Stomach (tissue), 19 donors: ENCODE measurements at regions of chr18 and their contacts with region 1.

Region 1: DNA sequence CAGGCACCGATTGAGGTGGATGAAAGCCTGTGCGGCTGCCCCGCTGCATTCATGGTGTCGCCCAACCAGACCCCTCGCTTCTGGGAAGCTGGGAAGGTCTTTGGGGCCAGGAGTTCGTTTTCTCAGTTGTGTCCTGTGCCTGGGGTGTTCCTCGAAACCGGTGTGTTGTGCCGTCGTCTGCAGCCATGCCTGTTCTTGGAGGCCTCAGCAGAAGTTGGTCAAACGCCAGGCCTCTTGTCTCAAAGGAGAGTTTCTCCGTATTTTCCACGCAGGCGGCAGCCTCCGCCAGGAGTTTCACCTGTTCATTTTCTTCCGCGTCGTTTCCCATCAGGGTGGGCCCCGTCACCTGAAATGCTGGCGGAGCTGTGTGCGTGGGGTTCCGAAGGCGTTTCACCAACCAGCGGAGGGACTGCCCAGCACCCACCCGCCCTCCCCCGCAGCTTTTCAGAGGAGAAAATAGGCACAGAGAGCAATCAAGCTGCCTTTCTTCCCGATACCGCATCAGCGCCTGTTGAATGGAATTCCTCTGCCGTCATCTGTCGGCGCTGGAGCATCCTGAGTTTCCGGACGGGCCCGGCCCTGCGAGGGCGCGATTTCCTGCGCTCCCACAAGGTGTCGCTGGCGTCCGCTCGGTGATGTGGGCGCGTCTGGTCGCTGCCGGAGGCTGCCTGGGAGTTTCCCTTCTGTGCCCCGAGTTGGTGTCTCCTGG is 17.0 kb upstream of the NFATC1 start:
- DNase-seq: peak; percentile 84 to 93
- H3K4me3 ChIP-seq: no peak overlapping the region
- H3K27ac ChIP-seq: no peak overlapping the region
- H3K4me1 ChIP-seq: peaks cover 0 to 9% (median 7%) of the 10 kb centered on the region in 4 donors
- H3K27me3 ChIP-seq: peaks cover 0 to 10% (median 0%) of the 10 kb centered on the region in 3 donors
- CTCF ChIP-seq: peak in 6 of 7 experiments; percentile 58 to 96 (median 93)
- EP300 ChIP-seq: no peak
- POLR2A ChIP-seq: no peak

Region 2: DNA sequence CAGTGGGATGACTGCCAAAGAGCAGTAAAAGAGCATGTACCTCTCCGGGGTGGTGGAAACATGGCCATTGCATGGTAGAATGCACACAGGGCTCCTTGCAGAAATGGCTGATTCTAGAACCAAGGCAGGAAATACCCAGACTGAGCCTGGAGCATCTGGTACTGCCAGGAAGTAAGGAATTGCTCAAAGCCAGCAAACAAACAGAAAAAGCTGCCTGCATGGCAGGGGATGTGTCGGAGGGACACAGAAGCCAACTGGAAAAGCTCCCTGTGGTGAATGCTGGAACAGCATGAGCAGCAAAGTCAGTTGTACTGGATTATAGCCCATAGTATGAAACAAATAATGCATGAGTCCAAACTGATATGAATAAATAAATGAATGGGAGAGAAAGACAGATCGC is 61.0 kb before region 1 on chr18:
- intact Hi-C with region 1: no loop called
- DNase-seq: no peak
- H3K4me3 ChIP-seq: no peak overlapping the region
- H3K27ac ChIP-seq: no peak overlapping the region
- H3K4me1 ChIP-seq: no peaks in the 10 kb centered on the region
- H3K27me3 ChIP-seq: no peaks in the 10 kb centered on the region
- CTCF ChIP-seq: no peak
- EP300 ChIP-seq: no peak
- POLR2A ChIP-seq: no peak

Region 3: GRCh38 chr18:79528846-79529245 is 150.2 kb after region 1 on chr18:
- intact Hi-C with region 1: loop called (anchors 2 kb)
- DNase-seq: peak; percentile 69 to 86
- H3K4me3 ChIP-seq: no peak overlapping the region
- H3K27ac ChIP-seq: no peak overlapping the region
- H3K4me1 ChIP-seq: peaks cover 6 to 18% (median 13%) of the 10 kb centered on the region in 4 donors
- H3K27me3 ChIP-seq: peaks cover 0 to 44% (median 0%) of the 10 kb centered on the region in 3 donors
- CTCF ChIP-seq: peak in 5 of 7 experiments; percentile 87 to 95 (median 90)
- EP300 ChIP-seq: no peak
- POLR2A ChIP-seq: no peak

Region 4: DNA sequence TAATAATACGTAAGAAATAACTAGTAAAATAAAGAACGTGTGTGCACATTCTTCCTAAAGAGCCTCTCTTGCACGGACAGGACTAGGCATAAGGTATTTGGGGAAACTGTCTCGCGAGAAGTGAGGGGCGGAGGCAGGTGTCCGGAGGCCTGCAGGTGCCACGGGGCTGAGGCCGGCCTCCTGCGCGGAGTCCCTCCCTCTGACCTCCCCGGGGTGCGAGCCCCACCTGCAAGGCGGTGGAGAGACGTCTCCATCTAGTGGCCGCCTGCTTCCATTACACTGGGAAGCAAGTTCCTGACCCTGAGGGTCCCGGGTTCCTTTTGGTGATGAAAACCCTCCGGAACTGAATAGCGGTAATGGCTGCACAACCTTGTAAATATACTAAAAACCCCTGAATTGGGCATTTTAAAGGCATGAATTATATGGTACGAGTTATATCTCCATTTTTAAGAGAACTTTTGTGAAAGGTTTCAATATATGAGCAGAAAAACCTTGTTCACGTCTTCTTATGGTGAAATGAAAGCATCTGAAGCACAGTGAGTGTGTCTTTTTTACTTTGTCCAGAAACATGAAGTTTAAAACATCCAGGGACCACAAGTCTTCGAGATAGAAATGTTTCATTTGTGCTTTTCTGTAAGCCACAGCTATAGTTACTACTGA is 265.4 kb after region 1 on chr18:
- intact Hi-C with region 1: loop called (anchors 5 kb)
- DNase-seq: peak; percentile 60 to 84
- H3K4me3 ChIP-seq: no peak overlapping the region
- H3K27ac ChIP-seq: no peak overlapping the region
- H3K4me1 ChIP-seq: peaks cover 0 to 14% (median 5%) of the 10 kb centered on the region in 4 donors
- H3K27me3 ChIP-seq: peaks cover 0 to 38% (median 6%) of the 10 kb centered on the region in 3 donors
- CTCF ChIP-seq: peak in 5 of 7 experiments; percentile 81 to 94 (median 91)
- EP300 ChIP-seq: no peak
- POLR2A ChIP-seq: no peak